ENCODE measurements at regions of chr6 and their contacts with region 1.

Region 1: DNA sequence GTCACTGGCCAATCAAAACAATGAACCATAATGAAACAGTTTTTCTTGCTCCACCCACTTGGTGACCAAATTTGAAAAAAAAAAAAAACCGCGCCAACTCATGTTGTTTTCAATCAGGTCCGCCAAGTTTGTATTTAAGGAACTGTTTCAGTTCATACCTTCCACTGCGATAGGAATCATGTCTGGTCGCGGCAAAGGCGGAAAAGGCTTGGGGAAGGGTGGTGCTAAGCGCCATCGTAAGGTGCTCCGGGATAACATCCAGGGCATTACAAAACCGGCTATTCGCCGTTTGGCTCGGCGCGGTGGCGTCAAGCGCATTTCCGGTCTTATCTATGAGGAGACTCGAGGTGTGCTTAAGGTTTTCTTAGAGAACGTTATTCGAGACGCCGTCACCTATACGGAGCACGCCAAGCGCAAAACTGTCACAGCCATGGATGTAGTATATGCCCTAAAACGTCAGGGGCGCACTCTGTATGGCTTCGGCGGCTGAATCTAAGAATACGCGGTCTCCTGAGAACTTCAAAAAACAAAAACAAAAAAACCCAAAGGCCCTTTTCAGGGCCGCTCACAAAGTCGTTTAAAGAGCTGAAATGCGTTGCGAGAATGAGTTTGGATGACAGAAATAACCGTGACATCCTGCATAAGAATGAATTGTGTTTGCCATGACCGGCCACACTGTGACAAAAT is 16.7 kb downstream of the HFE start:
- DNase-seq: peak; percentile 95
- H3K4me3 ChIP-seq: peak overlapping the region; percentile 46
- H3K27ac ChIP-seq: peak overlapping the region; percentile 79
- H3K4me1 ChIP-seq: peaks cover 11% of the 10 kb centered on the region
- H3K27me3 ChIP-seq: no peaks in the 10 kb centered on the region
- CTCF ChIP-seq: peak; percentile 51

Region 2: DNA sequence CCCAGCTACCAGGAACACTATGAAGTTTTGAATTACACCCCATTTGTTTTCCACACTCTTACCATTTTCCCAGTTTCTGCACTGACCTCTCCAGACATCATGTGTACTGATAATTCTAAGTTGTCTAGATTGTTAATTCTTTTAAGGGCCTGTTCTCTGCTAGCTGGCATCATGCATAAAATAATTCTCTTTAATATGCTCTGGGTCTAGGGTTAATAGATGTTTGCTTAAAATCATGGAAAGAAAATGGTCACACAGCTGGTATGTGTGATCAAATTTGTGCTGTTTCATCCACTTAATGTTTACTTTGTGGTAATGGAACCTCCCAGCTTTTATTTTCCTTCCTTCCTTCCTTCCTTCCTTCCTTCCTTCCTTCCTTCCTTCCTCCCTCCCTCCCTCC is 32.4 kb after region 1 on chr6:
- CTCF ChIA-PET with region 1: no interaction called
- POLR2A ChIA-PET with region 1: interaction called, 20 read pairs
- intact Hi-C with region 1: no loop called
- DNase-seq: peak; percentile 90
- H3K4me3 ChIP-seq: no peak overlapping the region
- H3K27ac ChIP-seq: peak overlapping the region; percentile 96
- H3K4me1 ChIP-seq: peaks cover 79% of the 10 kb centered on the region
- H3K27me3 ChIP-seq: no peaks in the 10 kb centered on the region
- CTCF ChIP-seq: no peak

Region 3: DNA sequence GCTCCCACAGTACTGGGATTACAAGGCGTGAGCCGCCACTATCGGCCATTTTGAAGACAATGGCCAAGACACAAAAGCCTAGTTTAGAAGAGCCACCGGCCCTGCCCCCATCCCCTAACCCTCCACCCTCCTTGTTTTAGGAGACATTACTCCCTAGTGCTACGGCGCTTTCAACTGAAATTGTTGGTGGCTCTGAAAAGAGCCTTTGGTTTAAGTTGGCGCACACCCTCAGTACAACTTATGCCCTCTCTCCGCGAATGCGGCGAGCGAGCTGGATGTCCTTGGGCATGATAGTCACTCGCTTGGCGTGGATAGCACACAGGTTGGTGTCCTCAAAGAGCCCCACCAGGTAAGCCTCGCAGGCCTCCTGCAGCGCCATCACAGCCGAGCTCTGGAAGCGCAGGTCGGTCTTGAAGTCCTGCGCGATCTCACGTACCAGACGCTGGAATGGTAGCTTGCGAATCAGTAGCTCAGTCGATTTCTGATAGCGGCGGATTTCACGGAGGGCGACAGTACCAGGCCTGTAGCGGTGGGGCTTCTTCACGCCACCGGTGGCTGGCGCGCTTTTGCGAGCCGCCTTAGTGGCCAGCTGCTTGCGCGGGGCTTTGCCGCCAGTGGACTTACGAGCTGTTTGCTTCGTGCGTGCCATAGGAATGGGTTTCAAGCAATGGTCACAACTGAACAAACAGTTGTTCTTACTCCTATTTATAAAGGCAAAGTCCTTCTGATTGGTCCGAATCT is 146.2 kb after region 1 on chr6:
- CTCF ChIA-PET with region 1: no interaction called
- POLR2A ChIA-PET with region 1: interaction called, 13 read pairs
- intact Hi-C with region 1: no loop called
- DNase-seq: peak; percentile 93
- H3K4me3 ChIP-seq: peak overlapping the region; percentile 68
- H3K27ac ChIP-seq: peak overlapping the region; percentile 96
- H3K4me1 ChIP-seq: peaks cover 3% of the 10 kb centered on the region
- H3K27me3 ChIP-seq: no peaks in the 10 kb centered on the region
- CTCF ChIP-seq: peak; percentile 44; the same call in 1 of the 2 replicates

Measured in A673 (cell line).